ENCODE measurements at regions of chr7 and their contacts with region 1.

Region 1: DNA sequence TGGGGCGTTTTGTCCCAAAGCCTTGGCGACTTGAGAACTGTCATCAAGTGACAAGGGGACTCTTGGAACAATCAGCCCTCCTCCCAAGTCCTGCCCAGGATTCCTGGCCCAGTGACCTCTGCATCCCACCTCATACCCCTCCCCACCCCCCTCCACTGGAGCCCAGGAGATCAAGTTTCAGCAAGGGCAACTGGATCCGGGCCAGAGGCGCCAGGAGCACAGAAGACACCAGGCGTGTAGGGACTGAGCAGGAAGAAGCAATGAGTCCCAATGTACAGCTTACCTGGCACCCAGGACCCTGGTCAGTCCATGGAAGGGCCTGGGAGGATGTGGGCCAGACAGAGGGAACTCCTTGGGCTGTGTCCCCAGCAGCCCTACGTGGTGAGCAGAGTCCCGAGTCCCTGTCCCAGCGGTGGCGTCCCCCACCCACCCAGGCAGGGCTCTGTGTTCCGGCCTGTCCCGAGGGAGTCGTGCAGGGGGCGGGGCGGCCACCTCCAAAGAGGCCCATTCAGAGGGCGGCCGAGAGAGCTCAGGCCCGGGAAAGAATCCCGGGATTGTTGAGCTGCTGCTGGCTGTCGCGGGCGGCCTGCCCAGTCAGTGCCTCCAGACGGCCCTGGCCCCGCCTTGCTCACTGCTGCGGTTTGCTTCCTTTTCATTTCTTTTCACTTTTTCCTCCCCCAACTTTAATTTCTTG is 254.1 kb downstream of the TNS3 start:
- DNase-seq: peak; percentile 81
- ATAC-seq: peak; percentile 92
- H3K4me3 ChIP-seq: peak overlapping the region; percentile 18; the same call in 1 of the 2 replicates
- H3K27ac ChIP-seq: peak overlapping the region; percentile 83
- H3K4me1 ChIP-seq: peaks cover 42% of the 10 kb centered on the region
- H3K27me3 ChIP-seq: no peaks in the 10 kb centered on the region
- CTCF ChIP-seq: no peak
- POLR2A ChIP-seq: no peak
- RAD21 ChIP-seq: no peak

Region 2: DNA sequence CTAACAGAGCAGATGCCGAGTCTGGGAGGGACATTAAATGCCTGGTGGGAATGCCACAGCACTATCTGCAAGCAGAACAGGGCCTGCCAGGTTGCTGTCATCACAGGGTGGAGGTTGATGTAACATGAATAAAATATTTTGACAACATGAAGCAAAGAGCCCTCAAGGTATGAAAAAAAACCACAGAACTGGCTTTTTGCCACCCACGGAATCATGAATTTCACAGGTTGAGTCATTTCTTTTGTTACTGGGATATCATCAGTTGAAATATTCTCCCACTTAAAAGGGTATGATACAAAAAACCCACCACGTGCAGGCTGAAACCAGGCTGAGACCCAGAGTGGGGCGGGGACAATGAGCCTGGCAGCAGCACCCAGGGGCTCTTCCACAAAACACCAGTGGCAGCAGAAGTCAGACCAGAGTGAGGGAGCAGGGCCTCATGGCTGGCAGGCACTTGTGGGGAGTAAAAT is 33.9 kb after region 1 on chr7:
- CTCF ChIA-PET with region 1: interaction called, 6 read pairs
- POLR2A ChIA-PET with region 1: no interaction called
- dilution Hi-C with region 1: no loop called
- in situ Hi-C with region 1: no loop called
- intact Hi-C with region 1: loop called (anchors 5 kb)
- DNase-seq: peak; percentile 88
- ATAC-seq: peak; percentile 48
- H3K4me3 ChIP-seq: no peak overlapping the region
- H3K27ac ChIP-seq: no peak overlapping the region
- H3K4me1 ChIP-seq: peaks cover 10% of the 10 kb centered on the region
- H3K27me3 ChIP-seq: no peaks in the 10 kb centered on the region
- CTCF ChIP-seq: no peak
- POLR2A ChIP-seq: no peak
- RAD21 ChIP-seq: no peak

Region 3: DNA sequence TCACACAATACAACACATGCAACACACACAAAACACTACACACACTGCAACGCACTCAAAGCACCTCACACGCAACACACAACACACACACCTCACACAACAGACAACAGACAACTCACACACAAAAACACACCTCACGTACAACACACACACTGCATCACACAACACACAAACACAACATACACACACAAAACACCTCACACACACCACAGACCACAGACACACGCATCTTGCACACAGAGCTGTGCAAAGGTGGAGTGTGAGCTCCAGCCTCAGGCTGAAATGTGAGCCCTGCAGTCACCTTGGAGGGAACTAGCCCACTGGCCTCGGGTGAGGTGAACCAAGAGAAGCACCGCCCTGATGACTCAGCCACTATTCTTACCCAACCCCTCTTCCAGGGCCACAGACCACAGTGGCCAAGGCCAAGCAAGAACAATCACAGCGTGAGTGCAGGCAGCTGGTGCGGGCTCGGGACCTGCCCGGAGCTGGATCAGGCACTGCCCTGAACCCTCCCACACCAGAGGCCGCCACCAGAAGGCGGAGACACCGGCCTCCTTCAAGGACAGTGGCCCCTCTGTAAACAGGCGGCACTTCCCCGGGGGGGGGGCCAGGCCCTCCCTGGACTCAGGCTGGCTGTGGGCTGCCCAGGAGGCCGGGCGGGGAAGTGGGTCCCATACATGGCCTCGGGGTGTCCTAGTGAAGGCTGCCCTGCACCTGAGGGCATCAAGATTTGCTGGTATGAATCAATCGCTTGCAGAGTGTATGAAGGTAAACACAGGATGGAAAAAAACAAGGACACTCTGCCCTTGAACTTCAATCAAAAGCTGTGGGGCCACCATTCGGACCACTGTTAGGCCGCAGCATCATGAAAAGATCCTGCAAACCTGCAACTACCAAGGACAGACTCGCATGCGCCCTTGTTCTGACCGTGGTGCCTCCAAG is 147.4 kb after region 1 on chr7:
- CTCF ChIA-PET with region 1: no interaction called
- POLR2A ChIA-PET with region 1: no interaction called
- dilution Hi-C with region 1: no loop called
- in situ Hi-C with region 1: no loop called
- intact Hi-C with region 1: no loop called
- DNase-seq: peak; percentile 96
- ATAC-seq: peak; percentile 85
- H3K4me3 ChIP-seq: no peak overlapping the region
- H3K27ac ChIP-seq: no peak overlapping the region; the same call in 1 of the 2 replicates
- H3K4me1 ChIP-seq: peaks cover 32% of the 10 kb centered on the region
- H3K27me3 ChIP-seq: no peaks in the 10 kb centered on the region
- CTCF ChIP-seq: no peak
- POLR2A ChIP-seq: peak; percentile 49
- RAD21 ChIP-seq: no peak; the same call in 1 of the 2 replicates

Measured in IMR-90 (cell line).